ENCODE measurements at regions of chr9 and their contacts with region 1.

Region 1: DNA sequence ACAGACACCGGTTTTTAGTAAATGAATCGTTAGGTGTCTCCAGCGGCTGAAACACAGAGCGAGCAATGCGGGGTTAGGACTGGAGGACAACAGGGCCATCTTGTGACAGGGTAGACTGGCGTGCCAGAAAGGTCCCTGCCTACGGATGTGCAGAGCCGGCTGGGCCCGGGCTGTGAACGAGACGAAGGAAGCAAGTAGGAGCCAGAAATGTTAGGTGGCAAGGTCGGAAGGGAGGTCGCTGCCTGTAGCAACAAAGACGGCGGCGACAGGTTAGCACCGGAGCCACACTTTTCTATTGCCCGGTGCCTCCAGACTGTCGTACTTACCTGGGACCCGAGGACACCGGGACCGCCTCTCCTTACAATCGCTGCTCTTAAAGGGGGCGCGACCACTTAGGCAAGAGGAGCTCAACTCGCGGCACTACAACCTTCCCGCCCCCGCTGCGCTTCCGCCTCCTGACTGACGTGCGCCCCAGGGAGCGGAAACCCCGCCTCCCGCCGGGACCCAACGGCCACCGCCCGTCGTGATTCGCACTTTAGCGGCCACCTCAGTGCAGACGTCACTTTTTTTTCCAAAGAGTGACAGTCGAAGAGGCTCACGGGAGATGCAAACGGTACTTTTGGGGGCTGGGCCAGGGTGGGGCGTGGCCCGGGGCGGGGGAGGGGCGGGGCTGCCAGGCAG is at the start of gene INIP:
- DNase-seq: peak; percentile 98
- H3K4me3 ChIP-seq: peak within 1 kb of the TSS; percentile 54 to 97 (median 69)
- H3K27ac ChIP-seq: peak within 1 kb of the TSS; percentile 89 to 96 (median 94)
- H3K4me1 ChIP-seq: peaks cover 0 to 17% (median 11%) of the 10 kb centered on the region in 4 donors
- H3K27me3 ChIP-seq: no peaks in the 10 kb centered on the region
- CTCF ChIP-seq: peak in 2 of 5 experiments; percentile 3 to 39
- EP300 ChIP-seq: no peak
- POLR2A ChIP-seq: peak; percentile 91
- total RNA-seq, gene INIP: 9.6 to 22.9 (median 16.2) TPM

Region 2: DNA sequence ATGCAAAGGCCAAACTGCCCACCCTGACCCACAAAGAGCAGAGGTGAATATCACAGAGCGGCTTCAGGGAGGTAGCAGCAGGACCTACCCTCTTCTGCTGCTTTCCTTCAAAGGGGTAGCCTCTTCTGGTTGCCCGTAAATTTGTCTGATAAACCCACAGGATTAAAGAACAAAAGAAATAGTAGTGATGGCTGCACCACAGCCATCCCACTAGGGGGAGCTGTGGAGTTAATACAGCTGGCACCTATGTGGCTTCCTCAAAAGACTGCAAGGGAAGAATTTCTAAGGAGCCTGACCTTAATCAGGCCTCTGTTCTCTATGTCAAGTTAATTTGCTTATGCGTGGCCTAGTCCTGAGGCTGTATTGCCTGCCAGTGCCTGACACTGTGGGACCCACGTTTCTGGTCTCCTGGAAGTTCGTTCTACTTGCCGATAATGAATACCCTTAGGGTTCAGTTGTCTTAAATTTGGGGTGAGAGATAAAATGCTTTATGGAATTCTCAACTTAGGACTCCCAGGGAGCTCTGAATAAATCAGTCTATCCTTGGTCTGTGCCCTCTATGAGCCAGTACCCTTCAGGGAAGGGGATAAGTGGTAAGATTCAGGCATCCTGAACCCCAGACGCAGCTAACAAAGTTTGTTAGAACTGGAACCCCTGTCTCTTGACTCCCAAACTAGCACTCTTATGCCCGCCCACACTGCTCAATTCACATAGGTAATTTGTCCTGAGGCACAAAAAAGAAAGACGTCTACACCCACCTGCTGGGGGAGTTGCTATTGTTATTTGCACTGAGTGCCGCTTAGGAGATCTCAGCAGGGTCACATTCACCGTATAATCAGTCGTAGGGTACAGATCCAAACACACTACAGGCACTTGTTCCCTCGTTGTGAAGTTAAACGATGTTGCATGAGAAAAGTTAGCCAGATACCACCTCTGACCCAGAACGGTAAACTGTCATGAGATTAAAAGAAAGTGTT is 619.8 kb before region 1 on chr9:
- in situ Hi-C with region 1: loop called in 1 of 4 experiments (anchors 25 kb)
- intact Hi-C with region 1: no loop called
- DNase-seq: peak; percentile 54
- H3K4me3 ChIP-seq: no peak overlapping the region
- H3K27ac ChIP-seq: no peak overlapping the region
- H3K4me1 ChIP-seq: peaks cover 0 to 6% (median 0%) of the 10 kb centered on the region in 4 donors
- H3K27me3 ChIP-seq: no peaks in the 10 kb centered on the region
- CTCF ChIP-seq: peak; percentile 80 to 95 (median 86)
- EP300 ChIP-seq: no peak
- POLR2A ChIP-seq: no peak

Region 3: GRCh38 chr9:112379177-112380101 is 338.4 kb before region 1 on chr9:
- in situ Hi-C with region 1: loop called in 1 of 4 experiments (anchors 25 kb)
- intact Hi-C with region 1: no loop called
- DNase-seq: peak; percentile 100
- H3K4me3 ChIP-seq: peak overlapping the region; percentile 51 to 83 (median 72)
- H3K27ac ChIP-seq: peak overlapping the region; percentile 98 to 100 (median 98)
- H3K4me1 ChIP-seq: peaks cover 4 to 49% (median 34%) of the 10 kb centered on the region in 4 donors
- H3K27me3 ChIP-seq: no peaks in the 10 kb centered on the region
- CTCF ChIP-seq: no peak
- EP300 ChIP-seq: no peak
- POLR2A ChIP-seq: peak; percentile 97

Region 4: DNA sequence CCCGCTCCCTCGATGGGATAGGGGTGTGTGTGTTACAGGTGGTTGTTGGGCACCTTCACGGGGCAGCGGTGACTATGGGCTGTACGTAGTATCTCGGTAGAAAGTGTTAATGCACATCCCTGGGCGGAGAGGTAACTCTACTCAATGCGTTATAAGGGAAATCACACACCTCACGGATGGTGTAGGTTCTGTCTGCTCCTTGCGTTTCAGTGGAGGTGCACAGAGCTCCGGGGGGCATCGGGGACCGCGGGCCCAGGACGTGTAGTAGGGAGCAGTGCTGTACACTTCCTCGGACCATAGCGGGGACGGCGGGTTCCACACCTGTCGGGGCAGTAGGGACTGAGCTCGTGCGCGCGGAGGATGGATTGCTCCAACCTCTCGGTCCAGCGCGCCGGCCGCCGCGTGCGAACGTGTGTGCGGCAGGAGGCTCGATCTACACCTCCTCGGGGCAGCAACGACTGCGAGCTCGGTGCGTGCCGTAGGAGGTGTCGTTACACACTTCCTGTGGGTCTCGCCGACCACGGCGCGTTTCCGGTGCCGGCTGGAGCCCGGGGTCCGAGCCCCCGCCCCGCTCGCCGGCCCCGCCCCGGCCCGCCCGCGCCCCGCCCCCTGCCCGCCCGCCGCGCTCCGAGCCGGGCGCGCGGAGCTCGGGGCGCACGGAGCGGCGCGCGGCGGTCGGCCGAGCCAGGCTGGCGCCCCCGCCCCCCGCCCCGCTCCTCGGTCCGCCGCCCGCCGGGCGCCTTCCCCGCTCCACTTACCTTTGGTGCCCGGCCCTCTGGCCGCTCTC is 231.4 kb before region 1 on chr9 and contains the start of gene KIAA1958:
- in situ Hi-C with region 1: no loop called
- intact Hi-C with region 1: loop called (anchors 10 kb)
- DNase-seq: peak; percentile 89
- H3K4me3 ChIP-seq: peak within 1 kb of the TSS; percentile 89 to 99 (median 96)
- H3K27ac ChIP-seq: peak within 1 kb of the TSS; percentile 84 to 91 (median 88)
- H3K4me1 ChIP-seq: peaks cover 0 to 9% (median 3%) of the 10 kb centered on the region in 4 donors
- H3K27me3 ChIP-seq: no peaks in the 10 kb centered on the region
- CTCF ChIP-seq: peak in 1 of 5 experiments; percentile 1
- EP300 ChIP-seq: no peak
- POLR2A ChIP-seq: peak; percentile 61
- total RNA-seq, gene KIAA1958: 5.0 to 12.4 (median 9.4) TPM

Region 5: DNA sequence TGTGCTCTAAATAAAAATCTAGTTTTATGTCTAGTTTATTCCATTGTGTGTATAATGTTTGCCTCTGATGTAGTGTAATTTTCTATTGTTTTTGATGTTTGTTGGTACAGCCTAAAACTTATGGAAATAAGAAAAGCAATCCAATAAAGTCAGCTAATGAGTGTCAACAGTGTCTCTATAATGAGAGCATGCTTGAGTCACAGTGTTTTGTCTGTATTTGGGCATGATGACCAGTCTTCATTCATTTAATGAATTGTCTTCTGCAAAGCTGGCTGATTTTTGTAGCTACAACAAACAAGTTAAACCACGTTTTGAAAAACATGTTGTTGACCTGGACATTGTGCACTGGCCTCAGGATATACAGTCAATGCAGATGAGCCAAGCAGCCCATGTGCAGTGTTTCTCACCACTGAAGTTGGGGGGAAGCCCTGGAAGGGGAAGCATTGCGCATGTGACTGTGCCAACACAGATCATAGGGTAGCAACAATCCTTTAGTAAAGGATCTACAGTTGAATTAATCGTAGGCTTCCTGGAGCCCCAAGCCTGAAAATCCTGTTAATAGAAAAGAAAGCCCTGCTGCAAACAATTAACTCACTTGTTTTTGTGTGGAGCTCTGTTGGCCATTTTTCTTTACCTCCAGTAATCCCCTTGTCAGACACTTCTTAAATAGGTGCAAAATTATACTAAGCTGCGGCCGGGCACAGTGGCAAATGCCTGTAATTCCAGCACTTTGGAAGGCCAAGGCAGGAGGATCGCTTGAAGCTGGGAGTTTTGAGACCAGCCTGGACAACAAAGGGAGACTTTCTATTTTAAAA is 87.9 kb before region 1 on chr9:
- in situ Hi-C with region 1: no loop called
- intact Hi-C with region 1: no loop called
- DNase-seq: no peak
- H3K4me3 ChIP-seq: no peak overlapping the region
- H3K27ac ChIP-seq: no peak overlapping the region
- H3K4me1 ChIP-seq: no peaks in the 10 kb centered on the region
- H3K27me3 ChIP-seq: no peaks in the 10 kb centered on the region
- CTCF ChIP-seq: no peak
- EP300 ChIP-seq: no peak
- POLR2A ChIP-seq: no peak

Region 6: DNA sequence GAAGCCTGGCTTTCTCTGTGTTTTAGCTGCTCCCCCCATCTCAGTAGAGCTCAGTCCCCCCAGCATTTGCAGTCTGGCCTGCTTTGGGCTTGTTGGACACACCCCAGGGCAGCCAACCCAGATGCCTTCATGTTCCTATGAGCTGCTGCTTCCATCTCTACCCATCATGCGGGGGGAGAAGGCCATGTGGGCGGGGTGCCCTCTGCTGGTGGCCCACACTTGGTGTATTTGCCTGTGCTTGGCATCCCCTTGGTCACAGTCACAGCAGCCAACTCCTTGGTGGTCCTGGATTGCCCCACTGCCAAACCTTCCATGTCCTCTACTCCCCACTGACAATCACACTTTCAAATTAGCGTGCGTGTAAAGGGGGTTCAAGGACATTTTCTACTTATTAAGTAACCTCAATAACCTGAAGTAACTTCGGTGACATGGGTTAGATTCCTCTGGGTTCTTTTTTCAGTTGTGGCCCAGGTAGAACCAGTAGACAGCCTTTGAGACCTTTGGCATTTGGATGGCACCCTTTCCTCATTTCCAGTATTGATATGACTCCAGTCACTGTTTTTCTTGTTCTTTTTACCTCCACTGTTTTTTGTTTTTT is 75.5 kb after region 1 on chr9:
- in situ Hi-C with region 1: no loop called
- intact Hi-C with region 1: loop called (anchors 10 kb)
- DNase-seq: peak; percentile 80
- H3K4me3 ChIP-seq: no peak overlapping the region
- H3K27ac ChIP-seq: no peak overlapping the region
- H3K4me1 ChIP-seq: peaks cover 0 to 26% (median 9%) of the 10 kb centered on the region in 4 donors
- H3K27me3 ChIP-seq: no peaks in the 10 kb centered on the region
- CTCF ChIP-seq: peak; percentile 65 to 70 (median 66)
- EP300 ChIP-seq: no peak
- POLR2A ChIP-seq: no peak

Measured in transverse colon (tissue), 4 donors.